ENCODE measurements at regions of chr17 and their contacts with region 1.

Region 1: GRCh38 chr17:47315451-47316266 is 8.1 kb upstream of the EFCAB13 start:
- DNase-seq: peak; percentile 48
- ATAC-seq: peak; percentile 89
- H3K4me3 ChIP-seq: no peak overlapping the region
- H3K27ac ChIP-seq: no peak overlapping the region
- H3K4me1 ChIP-seq: no peaks in the 10 kb centered on the region
- H3K27me3 ChIP-seq: no peaks in the 10 kb centered on the region
- CTCF ChIP-seq: peak; percentile 68 to 93 (median 80); a peak in 5 of 6 replicates
- EP300 ChIP-seq: no peak
- POLR2A ChIP-seq: no peak
- RAD21 ChIP-seq: peak; percentile 99

Region 2: GRCh38 chr17:46940621-46941404 is 374.8 kb before region 1 on chr17:
- CTCF ChIA-PET with region 1: interaction called, 16 read pairs
- POLR2A ChIA-PET with region 1: no interaction called
- RAD21 ChIA-PET with region 1: no interaction called
- SMC1A ChIA-PET with region 1: interaction called, 7 read pairs
- in situ Hi-C with region 1: no loop called
- intact Hi-C with region 1: no loop called
- DNase-seq: no peak
- ATAC-seq: peak; percentile 90
- H3K4me3 ChIP-seq: no peak overlapping the region
- H3K27ac ChIP-seq: no peak overlapping the region
- H3K4me1 ChIP-seq: no peaks in the 10 kb centered on the region
- H3K27me3 ChIP-seq: no peaks in the 10 kb centered on the region
- CTCF ChIP-seq: peak; percentile 88 to 92 (median 91); a peak in 5 of 6 replicates
- EP300 ChIP-seq: no peak
- POLR2A ChIP-seq: peak; percentile 35; the same call in 1 of the 2 replicates
- RAD21 ChIP-seq: peak; percentile 75

Region 3: DNA sequence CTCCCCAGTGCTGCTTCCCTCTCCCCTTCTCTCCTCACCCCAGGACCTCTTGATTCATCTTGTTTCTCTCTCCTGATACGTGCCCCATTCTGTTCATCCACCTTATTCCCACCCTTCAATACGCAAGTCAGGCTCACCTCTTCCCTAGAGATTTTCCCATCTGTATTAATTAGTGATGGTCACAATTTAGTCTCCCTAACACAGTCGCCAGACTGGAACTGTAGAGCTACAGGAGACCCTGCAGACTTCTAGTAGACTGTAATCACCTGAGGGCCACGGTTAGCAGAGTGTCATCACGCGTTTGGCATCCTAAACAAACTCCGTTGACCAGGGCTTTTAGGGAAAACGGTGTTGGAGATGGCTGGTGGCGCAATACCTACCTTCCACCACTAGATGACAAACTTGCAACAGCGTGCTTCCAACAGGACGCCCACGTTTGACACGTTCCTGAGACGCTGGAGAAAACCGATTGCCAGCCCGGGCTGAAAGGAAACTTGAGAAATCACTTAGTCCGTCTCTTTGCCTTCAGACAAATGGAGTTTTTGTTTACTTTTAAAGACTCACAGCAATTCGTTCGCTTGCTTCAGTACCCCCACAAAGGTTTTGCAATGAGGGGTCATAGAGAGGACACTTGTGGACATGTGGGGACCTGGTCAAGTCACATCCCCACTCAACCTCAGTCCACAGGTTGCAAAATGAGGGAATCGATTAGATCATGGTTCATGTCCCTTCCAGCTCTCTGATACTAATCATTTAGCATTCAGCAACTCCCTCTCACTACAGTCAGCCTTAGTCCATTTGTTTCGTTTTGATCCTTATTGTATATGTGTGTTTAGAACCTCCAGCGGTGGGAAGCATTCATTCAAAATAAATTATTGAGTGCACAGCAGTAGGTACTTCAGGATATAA is 85.9 kb before region 1 on chr17:
- CTCF ChIA-PET with region 1: interaction called, 227 read pairs
- POLR2A ChIA-PET with region 1: interaction called, 32 read pairs
- RAD21 ChIA-PET with region 1: interaction called, 158 read pairs
- SMC1A ChIA-PET with region 1: interaction called, 175 read pairs
- in situ Hi-C with region 1: loop called (anchors 5 kb)
- intact Hi-C with region 1: loop called (anchors 1 kb)
- DNase-seq: peak; percentile 75
- ATAC-seq: peak; percentile 84
- H3K4me3 ChIP-seq: peak overlapping the region; percentile 37; the same call in 1 of the 2 replicates
- H3K27ac ChIP-seq: no peak overlapping the region
- H3K4me1 ChIP-seq: peaks cover 18% of the 10 kb centered on the region
- H3K27me3 ChIP-seq: no peaks in the 10 kb centered on the region; a peak in 1 of 4 replicates
- CTCF ChIP-seq: peak; percentile 99 to 100 (median 100); a peak in 5 of 6 replicates
- EP300 ChIP-seq: no peak
- POLR2A ChIP-seq: no peak
- RAD21 ChIP-seq: peak; percentile 100

Region 4: GRCh38 chr17:47253541-47254402 is 61.9 kb before region 1 on chr17 and contains the start of gene ITGB3:
- CTCF ChIA-PET with region 1: interaction called, 26 read pairs
- POLR2A ChIA-PET with region 1: interaction called, 3 read pairs
- RAD21 ChIA-PET with region 1: interaction called, 13 read pairs
- SMC1A ChIA-PET with region 1: interaction called, 19 read pairs
- in situ Hi-C with region 1: no loop called
- intact Hi-C with region 1: loop called (anchors 1 kb)
- DNase-seq: no peak
- ATAC-seq: peak; percentile 93
- H3K4me3 ChIP-seq: peak within 1 kb of the TSS; percentile 81
- H3K27ac ChIP-seq: no peak within 1 kb of the TSS
- H3K4me1 ChIP-seq: no peaks in the 10 kb centered on the region; the same call in 1 of the 2 replicates
- H3K27me3 ChIP-seq: no peaks in the 10 kb centered on the region
- CTCF ChIP-seq: peak; percentile 56 to 64 (median 56); a peak in 5 of 6 replicates
- EP300 ChIP-seq: no peak
- POLR2A ChIP-seq: peak; percentile 34; the same call in 1 of the 2 replicates
- RAD21 ChIP-seq: peak; percentile 50
- polyA plus RNA-seq, gene ITGB3: 0.69 to 1.4 TPM

Region 5: GRCh38 chr17:47286198-47286914 is 29.3 kb before region 1 on chr17:
- CTCF ChIA-PET with region 1: interaction called, 65 read pairs
- POLR2A ChIA-PET with region 1: interaction called, 13 read pairs
- RAD21 ChIA-PET with region 1: interaction called, 42 read pairs
- SMC1A ChIA-PET with region 1: interaction called, 93 read pairs
- in situ Hi-C with region 1: no loop called
- intact Hi-C with region 1: loop called (anchors 1 kb)
- DNase-seq: peak; percentile 98
- ATAC-seq: peak; percentile 85
- H3K4me3 ChIP-seq: no peak overlapping the region
- H3K27ac ChIP-seq: peak overlapping the region; percentile 97
- H3K4me1 ChIP-seq: peaks cover 30% of the 10 kb centered on the region
- H3K27me3 ChIP-seq: no peaks in the 10 kb centered on the region
- CTCF ChIP-seq: no peak
- EP300 ChIP-seq: peak; percentile 65 to 70; a peak in 2 of 4 replicates
- POLR2A ChIP-seq: peak; percentile 54
- RAD21 ChIP-seq: peak; percentile 30; the same call in 1 of the 2 replicates

Region 6: GRCh38 chr17:47305302-47305923 is 10.2 kb before region 1 on chr17:
- CTCF ChIA-PET with region 1: interaction called, 9 read pairs
- POLR2A ChIA-PET with region 1: no interaction called
- RAD21 ChIA-PET with region 1: interaction called, 3 read pairs
- SMC1A ChIA-PET with region 1: interaction called, 19 read pairs
- in situ Hi-C with region 1: no loop called
- intact Hi-C with region 1: no loop called
- DNase-seq: no peak
- ATAC-seq: peak; percentile 63
- H3K4me3 ChIP-seq: no peak overlapping the region
- H3K27ac ChIP-seq: no peak overlapping the region
- H3K4me1 ChIP-seq: no peaks in the 10 kb centered on the region
- H3K27me3 ChIP-seq: no peaks in the 10 kb centered on the region
- CTCF ChIP-seq: no peak
- EP300 ChIP-seq: no peak
- POLR2A ChIP-seq: no peak
- RAD21 ChIP-seq: no peak

Measured in GM12878 (cell line).